Left cardiac atrium (tissue), 4 donors: ENCODE measurements at regions of chr17 and their contacts with region 1.

Region 1: DNA sequence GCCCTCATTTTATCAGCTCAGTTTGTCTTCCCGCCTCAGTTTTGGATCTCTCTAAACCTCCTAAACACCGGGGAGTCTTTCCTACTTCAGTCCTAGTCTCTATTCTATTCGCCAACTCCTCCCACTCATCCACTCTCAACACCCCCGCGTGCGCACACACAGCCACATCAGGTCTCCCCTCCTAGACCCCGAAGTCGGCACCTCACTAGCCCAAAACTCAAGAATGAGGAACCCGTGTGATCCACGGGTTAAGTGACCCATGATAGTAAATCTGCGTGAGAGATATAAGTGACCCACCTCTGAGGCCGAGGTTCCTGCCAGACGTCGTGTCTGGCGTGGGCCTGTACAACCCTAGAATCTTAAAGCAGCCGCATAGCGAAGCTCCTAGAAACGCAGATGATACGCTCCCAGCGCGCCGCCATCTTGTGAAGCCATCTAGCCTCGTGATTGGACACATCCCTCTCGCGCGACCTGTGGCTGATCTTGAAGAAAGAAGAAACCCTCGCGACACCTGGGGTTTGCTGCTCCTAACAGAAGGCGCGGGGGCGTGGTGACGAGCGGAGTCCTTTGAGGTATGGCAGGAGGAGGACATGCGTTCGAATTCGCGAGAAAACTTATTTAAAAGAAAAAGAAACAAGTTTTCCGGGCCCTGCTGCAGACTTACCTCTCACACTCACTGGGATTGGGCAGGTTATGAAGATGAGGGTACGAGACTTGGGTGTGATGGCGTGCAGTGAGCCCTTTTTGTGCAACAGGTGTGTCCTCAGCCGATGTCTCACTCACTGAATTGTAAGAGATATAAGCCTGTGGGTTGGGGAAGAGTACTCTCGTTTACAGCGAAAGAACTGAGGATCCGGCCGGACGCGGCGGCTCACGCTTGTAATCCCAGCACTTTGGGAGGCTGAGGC is at the start of gene METTL16:
- DNase-seq: peak; percentile 99
- ATAC-seq: peak; percentile 100
- total RNA-seq, gene METTL16: 19.2 to 22.7 TPM

Region 2: GRCh38 chr17:2624292-2624731 is 112.6 kb after region 1 on chr17:
- intact Hi-C with region 1: no loop called
- DNase-seq: no peak
- ATAC-seq: no peak

Region 3: DNA sequence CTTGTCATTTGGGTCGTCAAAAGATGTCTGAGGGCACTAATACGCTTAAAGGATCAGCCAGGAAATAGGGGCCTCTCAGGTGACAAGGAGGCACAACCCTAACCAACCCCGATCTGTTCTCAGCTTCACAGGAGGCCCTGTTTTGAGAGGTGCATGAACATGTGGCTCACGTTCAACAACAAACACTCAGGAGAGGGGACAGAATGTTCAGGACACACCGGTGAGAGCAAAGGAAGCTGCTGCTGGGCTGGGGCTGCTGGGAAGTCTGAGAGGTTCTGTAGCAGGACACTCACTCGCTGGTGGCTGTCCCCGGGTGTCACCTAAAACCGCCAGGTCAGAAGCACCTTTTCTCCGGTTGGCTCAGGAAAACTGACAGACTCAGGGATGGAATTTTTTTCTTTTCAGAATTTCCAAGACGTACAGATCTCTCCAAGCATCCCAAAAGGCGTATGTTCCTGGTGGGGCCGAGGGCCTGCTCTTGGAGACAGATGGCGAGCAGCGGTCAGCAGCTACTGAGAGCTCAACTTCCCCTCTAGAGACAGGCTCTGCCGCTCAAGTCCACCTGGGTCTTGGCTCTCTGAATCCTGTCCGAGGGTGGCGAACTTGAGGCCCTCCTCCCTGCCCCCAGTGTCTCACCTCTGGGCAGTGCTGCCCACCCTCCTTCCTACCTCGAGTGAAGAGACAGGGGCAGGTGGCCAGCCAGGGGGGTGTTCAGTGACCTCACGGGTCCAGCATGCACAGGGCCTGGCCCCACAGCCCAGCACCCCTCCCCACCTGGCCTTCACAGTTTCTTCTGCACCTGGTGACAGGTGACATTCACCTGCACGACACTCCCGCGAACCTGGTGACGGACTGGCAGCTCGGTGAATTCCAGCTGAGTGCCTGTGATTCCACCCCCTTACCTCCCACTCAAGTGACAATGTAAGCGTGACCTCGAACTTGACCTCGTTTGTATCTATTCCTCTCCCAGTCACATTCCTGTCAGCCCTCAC is 176.9 kb after region 1 on chr17:
- intact Hi-C with region 1: loop called in 1 of 2 experiments (anchors 10 kb)
- DNase-seq: peak; percentile 30
- ATAC-seq: peak in 1 of 2 donors; percentile 4